Dorsolateral prefrontal cortex (tissue), 120 donors: ENCODE measurements at regions of chr22 and their contacts with region 1.

Region 1: DNA sequence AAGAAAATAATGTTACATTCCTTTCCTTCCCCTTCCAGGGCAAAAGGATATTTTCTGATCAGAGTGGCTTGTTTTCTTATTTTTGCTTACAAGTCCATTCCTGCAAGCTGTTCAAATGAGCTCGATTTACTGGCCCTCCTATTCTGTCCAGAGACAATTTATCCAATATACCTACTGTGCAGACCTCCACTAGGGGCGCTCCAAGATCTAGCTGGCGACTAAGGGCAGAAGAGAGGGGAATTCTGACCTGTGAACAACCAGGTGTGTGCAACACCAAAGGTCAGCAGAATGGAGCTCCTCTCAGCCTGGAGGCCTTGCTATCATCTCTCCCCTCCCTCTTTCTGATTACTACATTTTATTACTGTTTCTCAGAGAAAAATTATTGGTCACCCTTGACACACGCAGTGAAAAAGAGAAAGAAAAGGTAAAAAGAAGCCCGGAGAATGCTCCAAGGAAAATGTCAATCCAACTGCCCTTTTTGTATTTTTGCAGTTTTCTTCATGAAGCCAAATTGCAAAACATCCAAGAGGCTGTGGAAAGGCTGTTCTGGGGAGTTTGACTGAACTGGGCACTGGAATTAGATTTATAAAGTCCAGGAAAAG is 3.2 kb downstream of the SEZ6L start:
- DNase-seq: peak in 8 of 10 donors; percentile 39 to 81 (median 59)
- H3K4me3 ChIP-seq: peak overlapping the region in 24 of 59 donors; percentile 13 to 79 (median 70)
- H3K27ac ChIP-seq: peak overlapping the region in 2 of 59 donors; percentile 12 to 51
- H3K27me3 ChIP-seq: peaks cover 0 to 53% (median 7%) of the 10 kb centered on the region in 45 donors
- CTCF ChIP-seq: peak; percentile 17 to 76 (median 65)

Region 2: DNA sequence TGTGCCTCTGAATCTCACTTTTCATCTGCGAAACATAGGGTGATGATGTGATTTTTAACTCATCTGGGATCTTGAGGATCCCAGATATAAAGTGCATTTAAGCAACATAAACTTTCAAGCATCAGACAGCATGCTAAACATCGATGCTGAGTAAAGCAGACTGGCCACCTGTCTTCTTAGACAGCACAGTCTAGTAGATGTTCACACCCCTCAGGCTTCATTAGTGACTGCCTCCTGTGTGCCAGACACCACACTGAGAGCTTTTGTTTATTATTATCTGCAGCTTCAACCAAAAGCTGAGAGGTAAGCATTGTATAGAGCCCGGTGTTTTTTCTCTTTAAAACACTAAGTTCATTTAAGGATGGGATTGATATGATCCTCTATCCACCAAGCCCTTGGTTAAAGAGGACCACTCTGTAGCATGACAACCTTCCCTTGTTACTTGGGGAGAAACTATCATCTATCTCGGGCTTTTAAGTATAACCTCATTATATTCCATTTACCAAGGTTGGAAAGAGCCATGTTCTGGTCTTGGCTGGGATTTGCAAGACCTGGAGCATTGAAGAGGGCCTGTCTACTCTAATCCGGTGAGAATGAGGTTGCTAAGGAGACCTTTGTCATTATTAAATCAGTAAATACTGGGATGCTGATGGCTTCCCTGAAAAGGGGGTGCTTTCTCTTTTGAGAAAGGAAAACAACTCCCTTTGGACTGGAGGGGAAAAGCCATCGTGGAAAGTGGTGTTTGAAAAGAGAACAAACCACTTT is 117.5 kb before region 1 on chr22:
- intact Hi-C with region 1: no loop called
- DNase-seq: no peak
- H3K4me3 ChIP-seq: no peak overlapping the region
- H3K27ac ChIP-seq: no peak overlapping the region
- H3K27me3 ChIP-seq: peaks cover 0 to 36% (median 6%) of the 10 kb centered on the region in 45 donors
- CTCF ChIP-seq: no peak

Region 3: GRCh38 chr22:26097840-26098239 is 74.7 kb before region 1 on chr22:
- intact Hi-C with region 1: no loop called
- DNase-seq: no peak
- H3K4me3 ChIP-seq: no peak overlapping the region
- H3K27ac ChIP-seq: no peak overlapping the region
- H3K27me3 ChIP-seq: peaks cover 0 to 27% (median 0%) of the 10 kb centered on the region in 45 donors
- CTCF ChIP-seq: no peak

Region 4: DNA sequence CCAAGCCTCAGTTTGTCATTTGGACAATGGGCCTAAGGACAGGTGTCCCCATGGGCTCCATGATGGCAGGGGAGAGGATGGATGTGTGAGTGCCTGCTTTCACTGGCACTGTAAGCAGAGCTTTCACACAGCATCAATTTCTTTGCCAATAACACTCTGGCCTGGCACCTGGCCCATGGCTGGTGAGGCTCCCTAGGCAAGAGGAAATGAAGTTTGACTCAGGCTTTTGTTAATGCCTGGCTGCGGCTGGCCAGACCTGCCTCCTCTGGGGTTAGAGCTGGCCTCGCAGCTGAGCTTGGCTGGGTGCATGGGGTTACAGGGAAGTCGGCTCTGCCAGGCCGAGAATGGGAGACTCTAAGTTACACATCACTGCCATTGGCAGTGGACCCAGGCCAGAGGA is 33.2 kb before region 1 on chr22:
- intact Hi-C with region 1: no loop called
- DNase-seq: peak in 9 of 10 donors; percentile 38 to 67 (median 51)
- H3K4me3 ChIP-seq: no peak overlapping the region
- H3K27ac ChIP-seq: no peak overlapping the region
- H3K27me3 ChIP-seq: peaks cover 0 to 37% (median 0%) of the 10 kb centered on the region in 45 donors
- CTCF ChIP-seq: no peak

Region 5: GRCh38 chr22:26364066-26365015 is 191.9 kb after region 1 on chr22:
- intact Hi-C with region 1: loop called in 1 of 2 experiments (anchors 10 kb)
- DNase-seq: peak in 9 of 10 donors; percentile 36 to 84 (median 63)
- H3K4me3 ChIP-seq: no peak overlapping the region
- H3K27ac ChIP-seq: no peak overlapping the region
- H3K27me3 ChIP-seq: no peaks in the 10 kb centered on the region
- CTCF ChIP-seq: peak; percentile 28 to 79 (median 63)

Region 6: DNA sequence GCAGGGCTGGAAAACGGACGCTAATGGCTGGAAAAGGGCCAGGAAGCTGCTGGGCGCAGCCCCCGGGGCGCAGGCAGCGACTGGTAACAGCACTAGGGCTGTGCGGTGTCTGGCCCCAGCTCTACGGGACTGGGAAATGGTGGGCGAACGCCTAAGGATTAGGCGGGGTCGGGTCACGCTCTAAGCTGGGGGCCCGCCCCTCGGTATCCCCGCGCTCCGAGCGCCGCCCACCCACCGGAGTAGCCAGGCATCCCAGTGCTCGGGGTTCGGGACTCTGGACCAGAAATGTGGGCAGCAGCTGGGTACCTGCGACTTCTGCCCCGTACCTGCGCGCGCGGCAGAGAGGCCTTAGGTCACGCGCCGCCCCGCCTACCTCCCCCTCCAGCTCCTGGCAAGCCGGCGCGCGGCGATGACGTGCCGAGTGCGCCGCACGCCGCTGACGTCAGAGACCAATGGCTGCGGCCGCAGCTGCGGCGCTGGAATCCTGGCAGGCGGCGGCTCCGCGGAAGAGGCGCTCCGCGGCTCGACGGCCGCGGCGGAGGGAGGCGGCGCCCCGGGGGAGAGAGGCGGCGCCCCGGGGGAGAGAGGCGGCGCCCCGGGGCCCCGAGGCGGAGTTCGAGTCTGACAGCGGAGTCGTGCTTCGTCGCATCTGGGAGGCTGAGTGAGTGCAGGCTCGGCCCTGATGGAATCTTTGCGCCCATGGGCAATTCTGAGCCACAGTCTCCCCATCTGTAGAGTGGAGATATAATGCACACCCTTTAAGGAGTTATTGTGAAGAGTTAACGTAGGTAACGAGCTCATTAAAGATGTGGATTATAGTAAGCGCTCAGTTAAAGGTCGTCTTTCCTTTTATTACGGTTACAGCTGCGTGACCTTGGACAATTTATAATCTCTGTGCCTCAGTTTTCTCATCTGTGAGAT is 311.2 kb after region 1 on chr22 and contains the starts of genes HPS4 and SRRD:
- intact Hi-C with region 1: no loop called
- DNase-seq: peak; percentile 74 to 91 (median 80)
- H3K4me3 ChIP-seq: peak within 1 kb of the TSS; percentile 72 to 100 (median 98)
- H3K27ac ChIP-seq: peak within 1 kb of the TSS; percentile 72 to 99 (median 95)
- H3K27me3 ChIP-seq: no peaks in the 10 kb centered on the region
- CTCF ChIP-seq: peak in 23 of 56 donors; percentile 11 to 55 (median 25)
- total RNA-seq, gene HPS4: 31.0 to 59.1 (median 45.3) TPM
- total RNA-seq, gene SRRD: 15.0 to 37.8 (median 23.3) TPM